ENCODE measurements at regions of chr1 and their contacts with region 1.

Region 1: DNA sequence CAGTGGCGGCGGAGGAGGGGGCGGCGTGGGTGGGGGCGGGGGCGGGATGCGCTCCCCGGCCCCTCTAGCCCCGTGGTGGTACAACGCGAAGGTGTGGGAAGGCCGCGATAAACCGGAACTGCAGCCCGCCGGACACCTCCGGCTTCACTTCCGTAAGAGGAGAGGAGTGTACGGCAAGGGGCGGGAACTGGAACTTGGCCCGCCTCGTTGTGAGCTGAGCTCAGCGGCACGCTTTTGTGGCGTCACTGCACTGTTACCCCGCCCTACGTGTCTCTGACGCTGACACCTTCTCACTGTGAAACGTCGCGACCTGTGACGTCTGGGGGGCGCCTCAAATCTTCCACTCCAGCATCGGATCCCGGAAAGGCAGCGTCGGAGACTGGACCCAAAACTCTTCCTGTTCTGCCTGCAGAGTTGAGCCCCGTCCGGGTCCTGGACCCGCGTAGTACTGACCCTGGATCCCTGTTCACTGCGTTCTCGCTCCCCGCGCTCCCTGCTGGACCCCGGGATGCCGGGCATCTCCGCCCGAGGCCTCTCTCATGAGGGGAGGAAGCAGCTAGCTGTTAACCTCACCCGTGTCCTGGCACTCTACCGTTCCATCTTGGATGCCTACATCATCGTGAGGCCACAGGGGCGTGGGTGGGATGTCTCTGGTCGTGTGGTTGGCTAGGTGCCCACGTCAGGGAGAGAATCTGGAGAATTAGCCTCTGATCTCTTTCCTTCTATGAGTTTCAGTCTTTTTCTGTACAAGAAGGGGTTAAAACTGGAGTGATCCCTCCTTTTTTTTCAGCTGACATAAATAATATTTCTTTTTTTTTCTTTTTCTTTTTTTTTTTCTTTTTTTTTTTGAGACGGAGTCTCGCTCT is at the start of gene ISG20L2:
- DNase-seq: peak; percentile 94 to 98 (median 96)
- H3K4me3 ChIP-seq: peak within 1 kb of the TSS; percentile 97
- H3K4me3 Mint-ChIP-seq: peak within 1 kb of the TSS in 1 of 7 donors; percentile 55
- H3K27ac ChIP-seq: peak within 1 kb of the TSS; percentile 98
- H3K27ac Mint-ChIP-seq: peak within 1 kb of the TSS in 4 of 8 donors; percentile 99 to 100 (median 99)
- H3K4me1 ChIP-seq: peaks cover 37% of the 10 kb centered on the region
- H3K4me1 Mint-ChIP-seq: peaks cover 24 to 27% (median 24%) of the 10 kb centered on the region in 3 donors
- H3K27me3 ChIP-seq: no peaks in the 10 kb centered on the region
- H3K27me3 Mint-ChIP-seq: peaks cover 0 to 2% of the 10 kb centered on the region in 2 donors
- total RNA-seq, gene ISG20L2: 69.4 to 75.9 TPM

Region 2: GRCh38 chr1:156500797-156501499 is 227.9 kb before region 1 on chr1:
- CTCF ChIA-PET with region 1: no interaction called
- POLR2A ChIA-PET with region 1: no interaction called
- DNase-seq: peak; percentile 90 to 97 (median 94)
- H3K4me3 ChIP-seq: peak overlapping the region; percentile 79
- H3K4me3 Mint-ChIP-seq: peak overlapping the region; percentile 81 to 98 (median 93)
- H3K27ac ChIP-seq: peak overlapping the region; percentile 95
- H3K27ac Mint-ChIP-seq: peak overlapping the region; percentile 98 to 100 (median 99)
- H3K4me1 ChIP-seq: peaks cover 77% of the 10 kb centered on the region
- H3K4me1 Mint-ChIP-seq: peaks cover 75 to 79% (median 78%) of the 10 kb centered on the region in 3 donors
- H3K27me3 ChIP-seq: no peaks in the 10 kb centered on the region
- H3K27me3 Mint-ChIP-seq: peaks cover 0 to 7% of the 10 kb centered on the region in 2 donors

Region 3: GRCh38 chr1:156659994-156660751 is 68.7 kb before region 1 on chr1:
- CTCF ChIA-PET with region 1: interaction called, 19 read pairs
- POLR2A ChIA-PET with region 1: no interaction called
- DNase-seq: peak; percentile 85 to 92 (median 88)
- H3K4me3 ChIP-seq: peak overlapping the region; percentile 36
- H3K4me3 Mint-ChIP-seq: peak overlapping the region; percentile 24 to 75 (median 62)
- H3K27ac ChIP-seq: peak overlapping the region; percentile 80
- H3K27ac Mint-ChIP-seq: peak overlapping the region; percentile 11 to 86 (median 74)
- H3K4me1 ChIP-seq: peaks cover 58% of the 10 kb centered on the region
- H3K4me1 Mint-ChIP-seq: peaks cover 35 to 60% (median 44%) of the 10 kb centered on the region in 3 donors
- H3K27me3 ChIP-seq: peaks cover 22% of the 10 kb centered on the region
- H3K27me3 Mint-ChIP-seq: peaks cover 17 to 23% of the 10 kb centered on the region in 2 donors

Region 4: DNA sequence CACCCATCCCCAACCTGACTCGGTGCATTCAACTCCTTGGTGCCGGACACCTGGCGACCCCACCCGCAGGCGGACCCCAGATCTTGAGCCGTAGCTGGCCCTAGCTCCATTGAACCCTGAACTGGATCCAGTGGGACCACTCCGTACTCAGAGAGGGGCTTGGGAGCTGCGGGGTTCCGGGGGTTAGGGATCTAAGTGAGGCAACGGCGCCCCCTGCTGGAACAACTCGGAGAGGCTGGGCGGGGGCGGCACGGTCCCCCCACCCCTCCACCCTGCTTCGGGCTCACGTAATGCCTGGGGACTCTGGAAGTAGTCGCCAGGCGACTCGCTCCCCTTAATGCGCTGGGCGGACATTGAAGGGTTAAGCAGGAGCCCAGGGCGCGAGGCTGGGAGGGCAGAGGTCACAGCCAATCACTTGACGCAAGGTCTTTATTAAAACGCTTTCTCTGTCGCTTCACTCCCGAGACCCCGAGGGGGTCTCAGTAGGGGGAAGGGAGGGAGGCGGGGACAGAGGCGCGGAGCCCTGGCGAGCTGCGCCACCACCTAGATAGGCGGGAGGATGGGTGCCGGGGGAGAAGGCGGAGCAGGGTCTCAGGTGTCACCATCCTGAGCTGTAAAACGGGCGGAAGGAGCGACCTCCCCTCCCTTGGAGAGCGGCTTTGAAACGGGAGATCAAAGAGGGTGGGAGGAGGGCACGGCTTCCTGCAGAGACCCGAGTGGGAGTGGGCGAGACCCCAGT is 22.7 kb before region 1 on chr1:
- CTCF ChIA-PET with region 1: interaction called, 86 read pairs
- POLR2A ChIA-PET with region 1: interaction called, 4 read pairs
- DNase-seq: peak; percentile 62 to 79 (median 67)
- H3K4me3 ChIP-seq: peak overlapping the region; percentile 92
- H3K4me3 Mint-ChIP-seq: peak overlapping the region; percentile 86 to 95 (median 88)
- H3K27ac ChIP-seq: peak overlapping the region; percentile 43
- H3K27ac Mint-ChIP-seq: peak overlapping the region; percentile 54 to 96 (median 84)
- H3K4me1 ChIP-seq: peaks cover 30% of the 10 kb centered on the region
- H3K4me1 Mint-ChIP-seq: peaks cover 22 to 38% (median 26%) of the 10 kb centered on the region in 3 donors
- H3K27me3 ChIP-seq: peaks cover 9% of the 10 kb centered on the region
- H3K27me3 Mint-ChIP-seq: peaks cover 5 to 13% of the 10 kb centered on the region in 2 donors

Region 5: DNA sequence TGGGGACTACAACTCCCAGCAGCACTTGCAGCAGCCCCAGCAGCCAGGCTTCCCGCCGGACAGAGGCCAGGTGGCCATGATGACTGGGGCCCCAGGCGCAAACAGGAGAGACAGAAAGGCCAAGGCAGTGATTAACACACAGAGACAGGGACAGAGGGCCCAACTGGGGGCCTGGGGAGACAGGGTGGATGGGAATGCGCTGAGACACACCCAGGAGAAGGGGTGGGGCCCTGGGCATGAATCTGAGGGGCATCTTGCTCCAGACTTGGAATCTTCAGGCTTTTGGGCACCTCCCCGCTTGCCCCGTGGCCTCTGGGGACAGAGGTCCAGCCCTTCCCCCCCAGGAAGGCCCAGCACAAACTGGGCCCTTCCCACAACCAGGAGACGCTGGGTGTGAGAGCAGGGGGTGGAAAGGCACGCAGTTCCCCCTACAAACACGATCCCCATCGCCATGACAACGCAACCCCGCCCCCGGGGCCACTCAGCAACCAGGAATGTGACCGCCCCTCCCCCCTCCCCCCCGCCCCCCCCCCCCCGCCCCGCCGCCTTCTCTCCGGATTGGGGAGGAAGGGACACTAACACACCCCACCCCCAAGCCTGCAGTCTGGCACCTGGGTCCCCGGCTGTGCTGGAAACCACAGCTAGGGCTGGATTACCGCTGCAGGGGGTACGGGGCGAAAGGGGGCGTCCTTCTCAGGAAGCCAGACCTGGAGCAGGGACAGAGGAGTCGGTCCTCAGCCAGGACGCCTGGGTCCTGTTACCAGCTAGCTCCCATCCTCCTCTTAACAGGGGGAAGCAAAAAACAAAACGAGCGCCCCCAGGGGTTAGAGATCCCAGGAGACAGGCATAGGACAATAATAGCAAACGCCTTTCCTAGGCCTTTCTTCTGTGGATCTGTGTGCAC is 18.1 kb after region 1 on chr1:
- CTCF ChIA-PET with region 1: interaction called, 58 read pairs
- POLR2A ChIA-PET with region 1: interaction called, 45 read pairs
- DNase-seq: peak; percentile 53 to 86 (median 67)
- H3K4me3 ChIP-seq: peak overlapping the region; percentile 57
- H3K4me3 Mint-ChIP-seq: peak overlapping the region; percentile 80 to 95 (median 91)
- H3K27ac ChIP-seq: peak overlapping the region; percentile 80
- H3K27ac Mint-ChIP-seq: peak overlapping the region; percentile 92 to 99 (median 96)
- H3K4me1 ChIP-seq: peaks cover 51% of the 10 kb centered on the region
- H3K4me1 Mint-ChIP-seq: peaks cover 52 to 60% (median 56%) of the 10 kb centered on the region in 3 donors
- H3K27me3 ChIP-seq: no peaks in the 10 kb centered on the region
- H3K27me3 Mint-ChIP-seq: no peaks in the 10 kb centered on the region

Region 6: GRCh38 chr1:156767101-156767878 is 38.5 kb after region 1 on chr1 and contains the start of gene PRCC:
- CTCF ChIA-PET with region 1: interaction called, 92 read pairs
- POLR2A ChIA-PET with region 1: interaction called, 28 read pairs
- DNase-seq: peak; percentile 93 to 99 (median 99)
- H3K4me3 ChIP-seq: peak within 1 kb of the TSS; percentile 85
- H3K4me3 Mint-ChIP-seq: no peak within 1 kb of the TSS
- H3K27ac ChIP-seq: peak within 1 kb of the TSS; percentile 97
- H3K27ac Mint-ChIP-seq: peak within 1 kb of the TSS in 2 of 8 donors; percentile 85 to 96
- H3K4me1 ChIP-seq: peaks cover 42% of the 10 kb centered on the region
- H3K4me1 Mint-ChIP-seq: peaks cover 28 to 46% (median 37%) of the 10 kb centered on the region in 3 donors
- H3K27me3 ChIP-seq: no peaks in the 10 kb centered on the region
- H3K27me3 Mint-ChIP-seq: peaks cover 0 to 1% of the 10 kb centered on the region in 2 donors
- total RNA-seq, gene PRCC: 106 to 111 TPM

Region 7: GRCh38 chr1:156860113-156860627 is 131.3 kb after region 1 on chr1:
- CTCF ChIA-PET with region 1: interaction called, 54 read pairs
- POLR2A ChIA-PET with region 1: interaction called, 3 read pairs
- DNase-seq: peak; percentile 46 to 71 (median 49)
- H3K4me3 ChIP-seq: peak overlapping the region; percentile 64
- H3K4me3 Mint-ChIP-seq: peak overlapping the region; percentile 74 to 90 (median 81)
- H3K27ac ChIP-seq: no peak overlapping the region
- H3K27ac Mint-ChIP-seq: peak overlapping the region in 4 of 8 donors; percentile 7 to 85 (median 33)
- H3K4me1 ChIP-seq: peaks cover 21% of the 10 kb centered on the region
- H3K4me1 Mint-ChIP-seq: peaks cover 14 to 36% (median 19%) of the 10 kb centered on the region in 3 donors
- H3K27me3 ChIP-seq: peaks cover 40% of the 10 kb centered on the region
- H3K27me3 Mint-ChIP-seq: peaks cover 41 to 61% of the 10 kb centered on the region in 2 donors

Region 8: DNA sequence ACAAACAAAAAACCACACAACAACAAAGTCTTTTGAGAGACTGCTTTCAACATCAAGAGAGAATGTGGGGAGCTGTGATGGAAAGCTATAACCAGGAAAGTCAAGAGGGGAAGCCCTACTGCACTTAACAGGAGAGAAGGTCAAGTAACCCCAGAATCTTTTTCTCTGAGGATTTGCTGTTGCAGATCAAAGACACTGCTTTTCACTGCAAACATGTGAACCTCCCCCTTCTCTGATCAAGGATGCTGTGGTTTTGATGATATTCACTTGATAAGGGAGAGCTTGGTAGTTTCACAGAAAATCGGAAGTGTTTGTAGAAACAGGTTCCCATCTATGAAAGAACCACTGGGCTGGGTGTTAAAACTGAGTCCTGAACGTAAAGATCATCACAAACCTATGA is 404.6 kb after region 1 on chr1:
- CTCF ChIA-PET with region 1: no interaction called
- POLR2A ChIA-PET with region 1: no interaction called
- DNase-seq: peak in 2 of 5 donors; percentile 65 to 66
- H3K4me3 ChIP-seq: peak overlapping the region; percentile 0
- H3K4me3 Mint-ChIP-seq: peak overlapping the region; percentile 56 to 85 (median 66)
- H3K27ac ChIP-seq: no peak overlapping the region
- H3K27ac Mint-ChIP-seq: peak overlapping the region; percentile 2 to 99 (median 86)
- H3K4me1 ChIP-seq: peaks cover 64% of the 10 kb centered on the region
- H3K4me1 Mint-ChIP-seq: peaks cover 70 to 77% (median 74%) of the 10 kb centered on the region in 3 donors
- H3K27me3 ChIP-seq: no peaks in the 10 kb centered on the region
- H3K27me3 Mint-ChIP-seq: peaks cover 0 to 2% of the 10 kb centered on the region in 2 donors